ENCODE measurements at regions of chr6 and their contacts with region 1.

Region 1: DNA sequence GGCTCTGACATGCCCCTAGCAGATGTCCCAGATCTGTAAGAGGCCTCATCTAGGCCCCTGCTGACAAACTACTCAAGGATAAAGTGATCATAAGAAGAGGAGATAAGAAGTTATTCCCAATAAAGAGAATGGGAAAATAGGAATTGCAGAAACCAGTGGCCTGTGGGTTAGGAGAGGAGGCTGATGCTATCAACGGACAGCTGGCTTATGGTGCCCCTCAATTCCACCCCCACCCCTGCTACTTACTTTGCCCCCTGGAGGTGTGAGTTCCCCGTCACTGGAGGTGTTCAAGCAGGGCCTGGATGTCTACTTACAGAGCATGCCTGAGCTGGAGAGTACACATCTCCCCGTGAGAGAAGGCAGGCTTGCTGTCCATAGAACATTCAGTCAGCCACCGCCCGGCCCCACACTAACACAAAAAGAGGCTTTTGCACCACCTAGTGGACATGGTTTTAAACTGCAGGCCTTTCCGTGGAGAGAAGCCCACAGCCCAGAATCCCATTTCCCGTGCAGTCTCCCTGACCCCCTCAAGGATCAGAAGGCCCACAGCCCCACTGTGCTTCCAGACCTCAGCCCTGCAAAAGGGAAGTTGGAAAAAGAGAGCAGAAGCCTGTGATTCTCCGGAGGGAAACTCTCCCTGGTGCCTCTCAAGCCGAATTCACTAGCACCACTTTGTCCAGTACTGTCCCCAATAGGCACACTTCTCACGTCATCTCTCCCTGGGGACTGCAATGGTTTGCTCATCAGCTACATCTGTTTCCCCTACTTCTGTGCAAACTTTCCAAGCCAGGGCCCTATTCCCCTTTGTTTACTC is 23.8 kb upstream of the BNIP5 start:
- DNase-seq: peak; percentile 52 to 85 (median 58)
- ATAC-seq: peak; percentile 98
- H3K4me3 ChIP-seq: no peak overlapping the region
- H3K4me3 Mint-ChIP-seq: no peak overlapping the region
- H3K27ac ChIP-seq: no peak overlapping the region
- H3K27ac Mint-ChIP-seq: no peak overlapping the region
- H3K4me1 ChIP-seq: peaks cover 7% of the 10 kb centered on the region
- H3K4me1 Mint-ChIP-seq: no peaks in the 10 kb centered on the region
- H3K27me3 ChIP-seq: no peaks in the 10 kb centered on the region
- H3K27me3 Mint-ChIP-seq: no peaks in the 10 kb centered on the region
- CTCF ChIP-seq: peak; percentile 75

Region 2: GRCh38 chr6:36075656-36076055 is 284.8 kb before region 1 on chr6:
- CTCF ChIA-PET with region 1: no interaction called
- POLR2A ChIA-PET with region 1: no interaction called
- intact Hi-C with region 1: loop called in 1 of 2 experiments (anchors 1 kb)
- DNase-seq: peak in 7 of 14 experiments; percentile 5 to 48 (median 24)
- ATAC-seq: peak; percentile 65
- H3K4me3 ChIP-seq: no peak overlapping the region
- H3K4me3 Mint-ChIP-seq: no peak overlapping the region
- H3K27ac ChIP-seq: no peak overlapping the region
- H3K27ac Mint-ChIP-seq: peak overlapping the region; percentile 40
- H3K4me1 ChIP-seq: no peaks in the 10 kb centered on the region
- H3K4me1 Mint-ChIP-seq: peaks cover 20% of the 10 kb centered on the region
- H3K27me3 ChIP-seq: no peaks in the 10 kb centered on the region
- H3K27me3 Mint-ChIP-seq: no peaks in the 10 kb centered on the region
- CTCF ChIP-seq: peak; percentile 39

Region 3: DNA sequence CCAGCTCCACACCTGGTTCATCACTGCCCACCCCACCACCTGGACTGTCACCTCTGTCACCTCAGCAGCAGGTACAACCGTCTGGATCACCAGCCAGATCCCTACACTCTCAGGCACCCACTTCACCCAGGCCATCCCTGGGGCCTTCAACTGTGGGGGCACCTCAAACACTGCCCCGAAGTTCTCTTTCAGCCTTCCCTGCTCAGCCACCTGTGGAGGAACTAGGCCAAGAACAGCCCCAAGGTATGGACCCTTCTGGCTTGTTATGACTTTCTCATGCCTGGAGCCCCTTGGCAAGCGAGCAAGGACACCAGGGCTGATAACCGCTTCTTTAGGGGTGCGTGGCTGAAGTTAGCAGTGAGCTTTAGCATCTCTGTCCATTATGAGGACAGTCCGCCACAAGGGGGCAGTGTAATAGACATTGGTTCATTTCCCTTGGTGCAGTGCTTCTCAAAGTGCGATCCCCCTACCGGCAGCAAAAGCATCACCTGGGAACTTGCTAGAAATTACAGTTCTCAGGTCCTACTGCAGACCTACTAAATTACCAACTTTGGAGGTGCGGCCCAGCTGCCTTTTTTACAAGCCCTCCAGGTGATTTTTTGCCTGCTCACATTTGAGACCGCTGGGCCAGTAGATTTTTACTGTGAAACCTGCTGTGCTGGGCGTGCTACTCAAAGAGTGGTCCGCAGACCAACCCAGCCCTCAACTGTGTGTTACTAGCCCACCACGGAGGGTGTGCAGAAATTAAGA is 58.0 kb before region 1 on chr6:
- CTCF ChIA-PET with region 1: interaction called, 4 read pairs
- POLR2A ChIA-PET with region 1: no interaction called
- intact Hi-C with region 1: loop called (anchors 1 kb)
- DNase-seq: peak; percentile 78 to 97 (median 92)
- ATAC-seq: peak; percentile 99
- H3K4me3 ChIP-seq: no peak overlapping the region
- H3K4me3 Mint-ChIP-seq: no peak overlapping the region
- H3K27ac ChIP-seq: no peak overlapping the region
- H3K27ac Mint-ChIP-seq: no peak overlapping the region
- H3K4me1 ChIP-seq: peaks cover 8% of the 10 kb centered on the region
- H3K4me1 Mint-ChIP-seq: peaks cover 7% of the 10 kb centered on the region
- H3K27me3 ChIP-seq: no peaks in the 10 kb centered on the region
- H3K27me3 Mint-ChIP-seq: peaks cover 16% of the 10 kb centered on the region
- CTCF ChIP-seq: peak; percentile 99

Region 4: DNA sequence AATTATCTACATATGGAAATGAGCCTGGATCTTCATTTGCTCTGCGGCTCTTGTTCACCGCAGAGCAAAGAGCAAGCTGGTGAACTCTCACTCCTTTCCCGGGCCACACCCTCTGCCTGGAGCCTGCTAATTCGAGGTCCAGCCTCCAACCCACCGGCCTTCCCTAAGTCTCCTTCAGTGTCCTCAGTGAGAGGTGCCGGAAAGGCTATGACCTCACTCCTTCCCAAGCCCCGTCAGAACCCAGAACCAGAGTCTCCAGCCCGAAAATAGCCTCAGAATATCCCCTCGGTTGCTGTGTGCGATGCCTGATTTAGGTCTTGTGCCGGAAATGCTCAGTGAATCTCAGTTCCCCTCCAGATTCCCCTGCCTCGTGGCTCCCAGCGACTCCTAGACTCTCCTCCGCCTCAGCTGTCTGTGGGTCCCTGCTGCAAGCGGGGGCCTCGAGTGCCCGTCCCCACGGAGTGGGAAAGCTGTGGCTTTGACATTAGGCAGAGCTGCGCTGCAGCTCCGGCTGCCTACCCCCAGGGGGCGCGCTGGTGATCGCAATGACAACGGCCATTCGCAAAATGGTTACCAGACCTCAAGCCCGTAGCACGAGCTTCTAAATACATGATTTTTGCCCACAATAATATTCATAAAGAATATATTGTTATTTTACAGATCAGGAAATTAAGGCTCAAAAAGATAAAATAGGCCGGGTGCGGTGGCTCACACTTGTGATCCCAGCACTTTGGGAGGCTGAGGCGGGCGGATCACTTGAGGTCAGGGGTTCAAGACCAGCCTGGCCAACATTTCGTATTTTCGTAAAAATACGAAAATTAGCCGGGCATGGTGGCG is 19.6 kb before region 1 on chr6:
- CTCF ChIA-PET with region 1: interaction called, 10 read pairs
- POLR2A ChIA-PET with region 1: interaction called, 4 read pairs
- intact Hi-C with region 1: no loop called
- DNase-seq: peak; percentile 46 to 83 (median 66)
- ATAC-seq: peak; percentile 91
- H3K4me3 ChIP-seq: peak overlapping the region; percentile 10
- H3K4me3 Mint-ChIP-seq: peak overlapping the region; percentile 68
- H3K27ac ChIP-seq: no peak overlapping the region
- H3K27ac Mint-ChIP-seq: no peak overlapping the region
- H3K4me1 ChIP-seq: peaks cover 20% of the 10 kb centered on the region
- H3K4me1 Mint-ChIP-seq: peaks cover 10% of the 10 kb centered on the region
- H3K27me3 ChIP-seq: peaks cover 5 to 14% of the 10 kb centered on the region in 2 experiments
- H3K27me3 Mint-ChIP-seq: peaks cover 22% of the 10 kb centered on the region
- CTCF ChIP-seq: peak; percentile 88

Region 5: GRCh38 chr6:36428911-36429310 is 68.5 kb after region 1 on chr6:
- CTCF ChIA-PET with region 1: no interaction called
- POLR2A ChIA-PET with region 1: no interaction called
- intact Hi-C with region 1: no loop called
- DNase-seq: peak in 1 of 14 experiments; percentile 12
- ATAC-seq: peak; percentile 48
- H3K4me3 ChIP-seq: no peak overlapping the region
- H3K4me3 Mint-ChIP-seq: no peak overlapping the region
- H3K27ac ChIP-seq: no peak overlapping the region
- H3K27ac Mint-ChIP-seq: no peak overlapping the region
- H3K4me1 ChIP-seq: peaks cover 1% of the 10 kb centered on the region
- H3K4me1 Mint-ChIP-seq: peaks cover under 1% of the 10 kb centered on the region
- H3K27me3 ChIP-seq: no peaks in the 10 kb centered on the region
- H3K27me3 Mint-ChIP-seq: no peaks in the 10 kb centered on the region
- CTCF ChIP-seq: peak; percentile 31

Measured in CD4-positive, alpha-beta T cell (primary cell).